Activated CD8-positive, alpha-beta T cell treated with anti-CD3 and anti-CD28 coated beads for 36 hours (primary cell): ENCODE measurements at regions of chr12 and their contacts with region 1.

Region 1: GRCh38 chr12:121626087-121626852 is at the start of gene ORAI1:
- DNase-seq: peak; percentile 98
- ATAC-seq: peak; percentile 61
- H3K4me3 Mint-ChIP-seq: peak within 1 kb of the TSS; percentile 94
- H3K27ac Mint-ChIP-seq: peak within 1 kb of the TSS; percentile 97
- H3K4me1 Mint-ChIP-seq: peaks cover 33% of the 10 kb centered on the region
- H3K27me3 Mint-ChIP-seq: no peaks in the 10 kb centered on the region
- CTCF ChIP-seq: no peak
- total RNA-seq, gene ORAI1: 37.0 to 38.1 TPM

Region 2: GRCh38 chr12:121443193-121443870 is 182.9 kb before region 1 on chr12:
- CTCF ChIA-PET with region 1: no interaction called
- POLR2A ChIA-PET with region 1: no interaction called
- intact Hi-C with region 1: no loop called
- DNase-seq: peak; percentile 79
- ATAC-seq: peak; percentile 79
- H3K4me3 Mint-ChIP-seq: no peak overlapping the region
- H3K27ac Mint-ChIP-seq: peak overlapping the region; percentile 74
- H3K4me1 Mint-ChIP-seq: peaks cover 16% of the 10 kb centered on the region
- H3K27me3 Mint-ChIP-seq: no peaks in the 10 kb centered on the region
- CTCF ChIP-seq: peak; percentile 90

Region 3: DNA sequence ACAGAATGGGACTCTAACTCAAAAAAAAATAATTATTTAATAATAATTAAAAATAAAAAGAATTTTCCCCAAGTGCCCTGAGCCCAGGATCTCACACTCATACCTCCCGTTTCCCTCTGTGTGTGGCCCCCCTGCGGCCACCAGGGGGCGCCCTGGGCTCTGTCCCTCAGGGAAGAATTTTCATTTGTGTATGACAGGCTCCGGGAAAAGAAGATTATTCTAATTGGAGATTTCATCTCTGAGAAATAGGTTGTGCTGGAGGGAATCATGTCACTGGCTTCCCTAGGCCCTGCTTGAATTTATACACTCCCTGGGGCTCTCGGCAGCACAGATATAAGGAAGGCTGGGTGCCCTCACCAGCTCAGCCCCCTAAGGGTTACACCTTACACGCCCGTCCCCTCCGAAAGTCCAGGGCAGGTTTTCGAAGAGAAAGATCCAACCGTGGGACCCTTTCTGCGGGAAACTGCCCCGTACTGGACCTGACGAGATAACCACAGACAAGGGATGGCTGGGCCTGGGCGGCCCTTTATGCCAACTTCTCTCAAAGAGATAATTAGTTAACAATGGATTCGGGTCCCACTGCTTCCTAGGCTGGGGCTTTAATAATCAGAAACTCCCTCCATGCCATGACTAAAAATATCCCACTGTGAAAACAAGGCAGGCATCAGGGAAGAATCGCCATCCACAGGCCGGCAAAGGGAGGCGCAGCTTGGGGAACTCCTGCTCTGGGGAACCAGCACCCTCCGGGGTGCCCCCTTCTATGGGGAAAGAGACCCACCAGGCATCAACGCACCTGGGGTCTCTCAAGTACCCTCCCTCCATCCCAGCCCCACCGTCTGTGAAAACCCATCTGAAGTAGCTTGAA is 126.1 kb before region 1 on chr12:
- CTCF ChIA-PET with region 1: interaction called, 22 read pairs
- POLR2A ChIA-PET with region 1: interaction called, 3 read pairs
- intact Hi-C with region 1: loop called (anchors 10 kb)
- DNase-seq: peak; percentile 80
- ATAC-seq: peak; percentile 78
- H3K4me3 Mint-ChIP-seq: no peak overlapping the region
- H3K27ac Mint-ChIP-seq: no peak overlapping the region
- H3K4me1 Mint-ChIP-seq: peaks cover 17% of the 10 kb centered on the region
- H3K27me3 Mint-ChIP-seq: no peaks in the 10 kb centered on the region
- CTCF ChIP-seq: peak; percentile 99

Region 4: DNA sequence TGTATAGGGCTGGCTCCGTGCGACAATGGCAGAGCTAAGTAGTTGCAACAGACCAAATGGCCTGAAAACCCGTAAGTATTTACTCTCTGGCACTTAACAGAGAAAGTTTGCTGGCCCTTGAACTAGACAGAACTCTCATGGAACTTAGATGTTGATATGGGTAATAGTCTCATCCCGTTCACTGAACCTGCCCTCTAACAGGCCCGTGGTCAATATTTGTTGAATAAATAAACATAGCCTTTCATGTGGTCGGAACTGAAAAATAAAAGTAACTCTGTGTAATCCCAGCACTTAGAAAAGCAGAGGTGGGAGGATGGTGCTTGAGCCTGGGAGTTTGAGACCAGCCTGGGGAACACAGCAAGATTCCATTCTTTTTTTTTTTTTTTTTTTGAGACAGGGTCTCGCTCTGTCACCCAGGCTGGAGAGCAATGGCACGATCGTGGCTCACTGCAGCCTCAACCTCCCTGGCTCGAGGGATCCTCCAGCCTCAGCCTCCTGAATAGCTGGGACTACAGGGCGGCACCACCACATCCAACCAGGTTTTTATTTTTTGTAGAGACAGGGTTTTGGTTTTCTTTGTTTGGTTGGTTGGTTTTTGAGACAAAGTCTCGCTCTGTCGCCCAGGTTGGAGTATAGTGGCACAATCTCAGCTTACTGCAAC is 75.2 kb before region 1 on chr12:
- CTCF ChIA-PET with region 1: interaction called, 69 read pairs
- POLR2A ChIA-PET with region 1: interaction called, 8 read pairs
- intact Hi-C with region 1: loop called (anchors 10 kb)
- DNase-seq: no peak
- ATAC-seq: no peak
- H3K4me3 Mint-ChIP-seq: no peak overlapping the region
- H3K27ac Mint-ChIP-seq: no peak overlapping the region
- H3K4me1 Mint-ChIP-seq: peaks cover 17% of the 10 kb centered on the region
- H3K27me3 Mint-ChIP-seq: no peaks in the 10 kb centered on the region
- CTCF ChIP-seq: no peak

Region 5: GRCh38 chr12:121579981-121580868 is 46.0 kb before region 1 on chr12:
- CTCF ChIA-PET with region 1: interaction called, 23 read pairs
- POLR2A ChIA-PET with region 1: interaction called, 28 read pairs
- intact Hi-C with region 1: no loop called
- DNase-seq: peak; percentile 90
- ATAC-seq: peak; percentile 70
- H3K4me3 Mint-ChIP-seq: peak overlapping the region; percentile 97
- H3K27ac Mint-ChIP-seq: peak overlapping the region; percentile 99
- H3K4me1 Mint-ChIP-seq: peaks cover 30% of the 10 kb centered on the region
- H3K27me3 Mint-ChIP-seq: no peaks in the 10 kb centered on the region
- CTCF ChIP-seq: no peak

Region 6: DNA sequence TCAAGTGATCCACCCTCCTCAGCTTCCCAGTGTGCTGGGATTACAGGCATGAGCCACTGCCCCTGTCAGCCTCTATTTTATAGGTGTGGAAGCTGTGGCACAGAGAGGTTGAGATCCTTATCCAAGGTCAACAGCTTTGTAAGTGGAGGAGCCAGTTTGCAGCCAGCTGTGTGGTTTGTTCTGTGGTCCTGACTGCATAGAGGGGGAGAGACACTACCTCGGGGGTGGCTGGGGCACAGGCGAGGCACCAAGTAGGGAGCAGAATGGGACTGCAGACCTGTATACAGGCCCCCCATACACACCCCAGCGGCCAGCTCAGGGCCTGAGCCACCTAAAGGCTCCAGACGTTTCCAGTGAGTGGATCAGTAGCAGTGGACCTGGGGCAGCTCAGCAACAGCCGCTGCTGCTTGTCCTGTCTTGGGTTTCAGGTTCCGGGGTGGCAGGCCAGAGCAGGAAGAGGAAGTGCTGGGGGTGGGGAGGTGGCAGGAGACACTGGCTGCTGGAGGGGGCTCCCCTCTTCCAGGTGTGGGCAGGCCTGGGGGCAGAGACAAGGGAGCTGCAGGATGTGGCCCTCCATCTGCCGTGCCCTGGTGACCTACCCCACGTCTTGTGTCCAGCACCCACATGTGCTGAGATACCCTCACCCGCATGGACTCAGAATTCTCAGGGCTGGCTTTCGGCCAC is 11.1 kb after region 1 on chr12:
- CTCF ChIA-PET with region 1: interaction called, 38 read pairs
- POLR2A ChIA-PET with region 1: interaction called, 69 read pairs
- intact Hi-C with region 1: no loop called
- DNase-seq: peak; percentile 89
- ATAC-seq: peak; percentile 91
- H3K4me3 Mint-ChIP-seq: peak overlapping the region; percentile 60
- H3K27ac Mint-ChIP-seq: peak overlapping the region; percentile 95
- H3K4me1 Mint-ChIP-seq: peaks cover 48% of the 10 kb centered on the region
- H3K27me3 Mint-ChIP-seq: no peaks in the 10 kb centered on the region
- CTCF ChIP-seq: no peak

Region 7: GRCh38 chr12:121663610-121663929 is 37.3 kb after region 1 on chr12:
- CTCF ChIA-PET with region 1: interaction called, 76 read pairs
- POLR2A ChIA-PET with region 1: interaction called, 19 read pairs
- intact Hi-C with region 1: no loop called
- DNase-seq: no peak
- ATAC-seq: no peak
- H3K4me3 Mint-ChIP-seq: peak overlapping the region; percentile 94
- H3K27ac Mint-ChIP-seq: peak overlapping the region; percentile 97
- H3K4me1 Mint-ChIP-seq: peaks cover 61% of the 10 kb centered on the region
- H3K27me3 Mint-ChIP-seq: no peaks in the 10 kb centered on the region
- CTCF ChIP-seq: no peak

Region 8: DNA sequence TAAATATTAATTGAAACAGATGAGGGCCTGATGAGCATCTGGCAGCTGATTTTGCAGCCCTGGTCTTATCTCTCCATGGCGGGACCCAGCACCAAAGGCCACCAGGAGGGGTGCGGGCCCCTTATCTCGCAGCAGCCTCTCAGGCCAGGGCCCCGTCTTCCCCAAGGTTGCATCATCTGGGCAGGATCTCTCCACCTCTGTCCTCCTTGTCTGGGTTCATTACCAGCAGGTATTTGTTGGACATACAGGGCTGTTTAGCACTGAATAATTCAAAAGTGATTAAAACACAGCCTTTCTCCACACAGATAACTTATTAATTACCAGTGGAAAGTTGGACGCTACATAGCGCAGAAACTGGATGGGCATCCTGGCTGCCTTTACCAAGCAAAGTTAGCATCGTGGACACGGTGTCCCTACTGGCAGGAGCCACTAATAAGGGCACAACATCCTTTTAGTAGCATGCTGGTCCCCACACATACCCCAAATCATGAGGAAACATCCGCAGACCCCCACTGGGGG is 112.1 kb after region 1 on chr12:
- CTCF ChIA-PET with region 1: no interaction called
- POLR2A ChIA-PET with region 1: no interaction called
- intact Hi-C with region 1: no loop called
- DNase-seq: no peak
- ATAC-seq: no peak
- H3K4me3 Mint-ChIP-seq: no peak overlapping the region
- H3K27ac Mint-ChIP-seq: no peak overlapping the region
- H3K4me1 Mint-ChIP-seq: peaks cover 3% of the 10 kb centered on the region
- H3K27me3 Mint-ChIP-seq: no peaks in the 10 kb centered on the region
- CTCF ChIP-seq: no peak

Region 9: DNA sequence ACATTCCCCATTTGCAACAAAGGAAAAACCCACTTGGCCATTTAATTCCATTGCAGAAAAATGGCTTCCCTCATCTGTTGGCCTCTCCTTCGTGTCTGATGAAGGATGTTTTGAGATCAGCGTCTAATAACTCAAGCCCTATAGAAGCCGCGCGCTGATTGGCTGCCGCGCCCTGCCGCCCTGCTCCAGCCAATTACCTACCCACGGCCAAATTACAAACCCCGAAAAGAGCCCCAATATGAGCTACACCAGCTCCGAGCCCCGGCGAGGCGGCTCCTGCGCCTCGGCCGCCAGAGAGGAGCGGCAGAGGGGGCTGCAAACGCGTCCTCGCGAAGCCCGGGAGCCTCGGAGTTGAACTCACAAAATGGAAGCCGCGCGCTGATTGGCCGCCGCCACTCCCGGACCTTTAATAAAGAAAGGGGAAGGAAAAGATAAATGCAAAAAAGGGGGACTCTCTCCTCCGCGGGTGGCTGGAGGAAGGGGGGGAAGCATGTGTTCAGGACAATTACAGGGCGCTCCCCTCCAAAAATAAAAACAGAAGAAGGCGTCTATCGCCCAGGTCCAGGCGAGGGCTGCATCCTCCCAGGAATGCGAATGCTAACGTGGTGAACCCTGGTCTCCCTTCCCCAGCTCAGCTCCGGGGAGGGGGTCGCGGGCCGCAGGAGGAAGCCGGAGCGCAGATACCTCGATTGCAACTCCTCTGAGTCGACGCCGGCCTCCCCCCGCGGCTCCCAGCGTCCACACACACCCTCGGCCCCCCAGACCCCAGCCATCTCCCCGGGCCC is 176.8 kb after region 1 on chr12:
- CTCF ChIA-PET with region 1: no interaction called
- POLR2A ChIA-PET with region 1: interaction called, 11 read pairs
- intact Hi-C with region 1: no loop called
- DNase-seq: peak; percentile 97
- ATAC-seq: peak; percentile 60
- H3K4me3 Mint-ChIP-seq: peak overlapping the region; percentile 83
- H3K27ac Mint-ChIP-seq: peak overlapping the region; percentile 99
- H3K4me1 Mint-ChIP-seq: peaks cover 26% of the 10 kb centered on the region
- H3K27me3 Mint-ChIP-seq: no peaks in the 10 kb centered on the region
- CTCF ChIP-seq: no peak